ENCODE measurements at regions of chr21 and their contacts with region 1.

Region 1: DNA sequence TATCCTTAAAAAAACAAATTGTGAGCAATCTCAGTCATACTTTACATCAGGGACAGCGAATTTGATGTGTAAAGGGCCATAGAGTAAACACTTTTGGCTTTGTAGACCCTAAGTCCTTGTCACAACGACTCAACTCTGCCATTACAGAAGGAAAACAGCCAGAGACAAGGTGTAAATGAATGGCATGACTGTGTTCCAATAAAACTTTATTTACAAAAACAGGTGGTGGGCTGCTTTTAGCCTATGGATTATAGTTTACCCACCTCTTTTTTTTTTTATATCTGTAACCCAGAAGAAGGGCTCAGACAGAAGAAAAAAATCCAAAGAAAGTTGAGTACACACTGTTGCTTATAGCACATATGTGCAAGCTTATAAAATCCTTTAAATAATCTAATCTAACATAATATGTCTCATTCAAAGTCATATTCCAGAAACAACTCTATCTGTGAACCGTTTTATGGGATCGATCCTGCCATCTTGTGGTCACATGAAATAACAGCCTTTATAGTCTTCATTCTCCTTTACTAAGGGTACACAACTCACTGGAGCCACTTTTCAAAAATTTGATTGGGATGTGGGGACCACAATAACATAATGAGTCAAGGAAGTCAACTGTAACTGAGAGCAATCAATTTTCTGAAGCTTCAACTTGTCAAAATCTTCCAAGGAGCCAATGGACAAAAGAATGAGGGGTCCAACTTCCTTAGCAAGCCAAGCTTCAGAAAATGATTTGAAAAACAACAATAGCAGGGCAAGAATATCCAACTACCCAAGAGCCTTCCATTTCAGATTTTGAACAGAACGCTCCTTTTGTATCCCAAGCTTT is 142.2 kb upstream of the KRTAP19-8 start:
- DNase-seq: no peak
- ATAC-seq: peak in 2 of 4 donors; percentile 37 to 43
- H3K4me3 ChIP-seq: no peak overlapping the region
- H3K27ac ChIP-seq: no peak overlapping the region
- H3K4me1 ChIP-seq: peaks cover 0 to 16% (median 0%) of the 10 kb centered on the region in 12 donors
- H3K27me3 ChIP-seq: no peaks in the 10 kb centered on the region
- CTCF ChIP-seq: peak; percentile 38 to 72 (median 56)
- POLR2A ChIP-seq: no peak

Region 2: DNA sequence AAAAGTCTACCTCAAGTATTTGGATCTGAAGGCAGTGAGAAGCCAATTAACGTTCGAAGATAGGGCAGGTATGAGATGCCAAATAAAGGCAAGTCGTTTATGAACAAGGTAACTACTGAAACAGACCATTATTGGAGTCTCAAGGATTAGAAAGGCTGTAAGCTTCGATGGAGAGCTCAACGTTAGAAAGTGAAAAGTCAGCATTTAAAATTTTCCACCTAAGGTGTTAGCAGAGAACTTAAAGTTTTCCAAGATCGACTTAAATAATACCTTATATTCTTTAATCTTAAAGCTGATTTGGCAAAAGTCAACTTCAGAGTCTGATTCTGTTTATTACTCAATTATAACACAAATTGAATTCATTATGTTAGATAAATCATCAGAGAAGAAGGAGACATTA is 1042.0 kb before region 1 on chr21:
- intact Hi-C with region 1: no loop called
- DNase-seq: no peak
- ATAC-seq: no peak
- H3K4me3 ChIP-seq: no peak overlapping the region
- H3K27ac ChIP-seq: no peak overlapping the region
- H3K4me1 ChIP-seq: no peaks in the 10 kb centered on the region
- H3K27me3 ChIP-seq: no peaks in the 10 kb centered on the region
- CTCF ChIP-seq: no peak
- POLR2A ChIP-seq: no peak

Region 3: DNA sequence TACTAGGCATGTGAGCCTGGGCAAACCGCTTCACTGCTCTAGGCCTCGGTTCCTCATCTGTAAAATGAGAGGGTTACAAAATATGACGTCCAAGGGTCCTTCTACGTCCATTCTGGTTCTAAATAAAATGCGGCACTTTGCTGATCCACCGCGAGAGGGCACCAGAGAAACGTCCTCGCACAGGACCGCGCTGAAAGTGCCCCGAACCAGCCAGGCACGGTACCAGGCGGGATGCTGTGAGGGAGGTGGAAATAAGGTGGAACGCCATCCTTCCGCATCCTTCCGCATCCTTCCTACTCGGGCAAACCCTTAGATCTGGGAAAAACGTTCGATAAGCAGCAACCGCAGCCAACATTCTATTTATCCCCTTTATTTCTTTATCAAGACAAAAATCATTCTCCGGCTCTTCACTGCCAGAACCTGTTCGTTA is 81.9 kb before region 1 on chr21:
- intact Hi-C with region 1: loop called (anchors 1 to 5 kb)
- DNase-seq: peak; percentile 48 to 79 (median 62)
- ATAC-seq: peak; percentile 32 to 74 (median 72)
- H3K4me3 ChIP-seq: no peak overlapping the region
- H3K27ac ChIP-seq: no peak overlapping the region
- H3K4me1 ChIP-seq: peaks cover 0 to 15% (median 0%) of the 10 kb centered on the region in 12 donors
- H3K27me3 ChIP-seq: peaks cover 0 to 14% (median 0%) of the 10 kb centered on the region in 9 donors
- CTCF ChIP-seq: peak; percentile 72 to 90 (median 84)
- POLR2A ChIP-seq: no peak

Measured in heart left ventricle (tissue), 16 donors.